Right cardiac atrium (tissue), 5 donors: ENCODE measurements at regions of chr2 and their contacts with region 1.

Region 1: DNA sequence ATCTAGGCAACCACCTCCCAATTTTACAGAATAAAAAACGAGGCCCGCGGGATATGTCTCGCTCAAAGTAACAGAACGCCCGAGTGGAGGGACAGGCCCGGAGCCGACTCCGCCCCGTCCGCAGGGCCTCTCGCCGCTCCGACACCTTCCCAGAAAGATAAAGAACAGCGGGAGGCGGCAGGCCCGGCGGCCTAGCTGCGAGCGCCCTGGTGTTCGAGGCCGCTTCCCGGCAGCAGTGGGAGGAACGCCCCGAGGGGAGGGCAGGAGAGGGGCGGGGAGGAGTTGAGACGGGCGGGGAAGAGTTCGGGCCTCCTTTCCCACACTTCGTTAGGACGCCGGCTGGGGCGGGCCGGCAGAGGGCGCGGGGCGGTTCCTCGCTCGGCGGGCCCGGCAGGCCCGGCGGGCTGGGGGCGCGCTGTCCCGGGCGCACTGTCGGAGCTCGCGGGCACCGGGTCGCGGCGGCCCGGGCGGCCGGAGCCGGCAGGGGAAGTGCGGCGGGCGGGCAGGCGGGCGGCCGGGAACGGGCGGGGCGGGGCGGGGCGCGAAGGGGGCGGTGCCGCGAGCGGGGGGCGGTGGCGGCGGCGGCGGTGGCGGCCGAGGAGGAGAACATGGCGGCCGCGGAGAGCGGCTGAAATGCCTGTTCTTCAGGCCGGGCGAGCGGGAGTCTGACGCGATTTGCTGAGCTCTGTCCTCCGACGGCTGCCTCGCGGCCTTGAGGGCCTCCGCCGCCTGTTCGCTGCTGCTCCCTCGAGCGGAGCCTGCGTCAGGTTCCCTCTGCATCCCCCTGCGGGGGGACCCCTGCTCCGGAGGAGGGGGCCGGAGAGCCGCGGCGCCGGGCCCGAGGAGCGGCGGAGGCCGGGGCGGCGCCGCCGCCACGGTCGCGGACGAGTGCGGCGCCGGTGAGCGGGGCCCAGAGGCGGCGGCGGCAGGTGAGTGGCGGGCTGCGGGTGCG is at the start of gene NCOA1:
- DNase-seq: peak; percentile 93 to 97 (median 96)
- ATAC-seq: peak; percentile 96
- H3K4me3 ChIP-seq: peak within 1 kb of the TSS; percentile 99
- H3K27ac ChIP-seq: peak within 1 kb of the TSS; percentile 100
- H3K4me1 ChIP-seq: peaks cover 2% of the 10 kb centered on the region
- H3K27me3 ChIP-seq: no peaks in the 10 kb centered on the region
- total RNA-seq, gene NCOA1: 31.8 to 37.1 (median 35.2) TPM

Region 2: GRCh38 chr2:24435391-24436316 is 55.3 kb before region 1 on chr2:
- intact Hi-C with region 1: loop called in 3 of 4 experiments (anchors 5 to 10 kb)
- DNase-seq: peak; percentile 76 to 84 (median 81)
- ATAC-seq: peak; percentile 84 to 85
- H3K4me3 ChIP-seq: peak overlapping the region; percentile 29
- H3K27ac ChIP-seq: peak overlapping the region; percentile 81
- H3K4me1 ChIP-seq: peaks cover 14% of the 10 kb centered on the region
- H3K27me3 ChIP-seq: no peaks in the 10 kb centered on the region

Region 3: GRCh38 chr2:24546669-24547068 is 55.7 kb after region 1 on chr2:
- intact Hi-C with region 1: no loop called
- DNase-seq: no peak
- ATAC-seq: no peak
- H3K4me3 ChIP-seq: no peak overlapping the region
- H3K27ac ChIP-seq: no peak overlapping the region
- H3K4me1 ChIP-seq: no peaks in the 10 kb centered on the region
- H3K27me3 ChIP-seq: no peaks in the 10 kb centered on the region

Region 4: GRCh38 chr2:24613154-24613814 is 122.3 kb after region 1 on chr2:
- intact Hi-C with region 1: loop called in 1 of 4 experiments (anchors 10 kb)
- DNase-seq: no peak
- ATAC-seq: peak in 1 of 2 donors; percentile 20
- H3K4me3 ChIP-seq: no peak overlapping the region
- H3K27ac ChIP-seq: no peak overlapping the region
- H3K4me1 ChIP-seq: peaks cover 2% of the 10 kb centered on the region
- H3K27me3 ChIP-seq: no peaks in the 10 kb centered on the region